Endothelial cell of umbilical vein (primary cell): ENCODE measurements at regions of chr11 and their contacts with region 1.

Region 1: DNA sequence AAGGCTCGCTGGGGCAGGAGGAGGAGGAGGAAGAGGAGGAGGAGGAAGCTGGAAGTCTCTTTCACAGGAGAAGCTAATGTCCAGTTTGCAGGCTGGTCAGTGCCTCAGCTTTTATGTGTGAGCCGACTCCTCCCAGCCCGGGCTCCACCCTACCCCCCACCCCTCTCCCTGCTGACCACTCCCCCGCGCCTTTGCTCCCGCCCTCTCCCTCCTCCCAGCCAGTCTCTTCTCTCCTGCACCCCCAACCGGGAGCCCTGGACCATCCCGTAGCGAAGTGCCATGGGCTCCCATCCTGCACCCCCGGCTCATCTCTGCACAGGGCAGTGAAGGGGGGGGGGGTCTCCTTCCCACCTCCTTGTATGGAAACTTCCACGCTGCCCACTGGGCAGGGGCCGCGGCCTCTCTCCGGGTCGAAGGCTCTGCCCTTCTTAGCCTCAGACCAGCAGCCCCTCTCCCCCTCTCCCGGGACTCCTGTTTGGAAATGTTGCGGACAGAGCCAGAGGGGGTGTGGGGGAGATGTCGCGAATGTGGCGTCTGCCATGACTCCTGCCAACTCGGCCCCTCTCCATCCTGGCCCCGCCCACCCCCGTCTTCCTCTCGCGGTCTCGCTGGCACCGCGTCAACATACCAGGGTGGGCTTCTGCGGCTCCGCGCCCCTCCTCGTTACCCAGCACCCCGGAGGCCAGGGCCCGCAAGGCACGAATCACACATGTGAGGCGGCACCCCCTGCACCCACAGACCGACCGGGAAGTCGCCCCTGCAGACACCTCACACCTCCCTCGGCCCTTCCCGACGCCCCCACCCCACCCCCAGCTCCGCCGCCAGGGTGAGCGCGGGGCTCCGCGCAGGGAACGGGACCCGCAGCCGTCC is 1.8 kb downstream of the IGF2 start:
- DNase-seq: peak; percentile 60
- H3K4me3 ChIP-seq: peak overlapping the region in 1 of 3 experiments; percentile 14
- H3K27ac ChIP-seq: no peak overlapping the region
- H3K4me1 ChIP-seq: peaks cover 3% of the 10 kb centered on the region
- H3K27me3 ChIP-seq: peaks cover 15 to 39% of the 10 kb centered on the region in 2 experiments
- CTCF ChIP-seq: no peak
- POLR2A ChIP-seq: no peak

Region 2: GRCh38 chr11:2036863-2037486 is 100.5 kb before region 1 on chr11:
- CTCF ChIA-PET with region 1: interaction called, 21 read pairs
- POLR2A ChIA-PET with region 1: no interaction called
- dilution Hi-C with region 1: no loop called
- intact Hi-C with region 1: no loop called
- DNase-seq: no peak
- H3K4me3 ChIP-seq: no peak overlapping the region
- H3K27ac ChIP-seq: no peak overlapping the region
- H3K4me1 ChIP-seq: no peaks in the 10 kb centered on the region
- H3K27me3 ChIP-seq: no peaks in the 10 kb centered on the region
- CTCF ChIP-seq: no peak
- POLR2A ChIP-seq: no peak

Region 3: DNA sequence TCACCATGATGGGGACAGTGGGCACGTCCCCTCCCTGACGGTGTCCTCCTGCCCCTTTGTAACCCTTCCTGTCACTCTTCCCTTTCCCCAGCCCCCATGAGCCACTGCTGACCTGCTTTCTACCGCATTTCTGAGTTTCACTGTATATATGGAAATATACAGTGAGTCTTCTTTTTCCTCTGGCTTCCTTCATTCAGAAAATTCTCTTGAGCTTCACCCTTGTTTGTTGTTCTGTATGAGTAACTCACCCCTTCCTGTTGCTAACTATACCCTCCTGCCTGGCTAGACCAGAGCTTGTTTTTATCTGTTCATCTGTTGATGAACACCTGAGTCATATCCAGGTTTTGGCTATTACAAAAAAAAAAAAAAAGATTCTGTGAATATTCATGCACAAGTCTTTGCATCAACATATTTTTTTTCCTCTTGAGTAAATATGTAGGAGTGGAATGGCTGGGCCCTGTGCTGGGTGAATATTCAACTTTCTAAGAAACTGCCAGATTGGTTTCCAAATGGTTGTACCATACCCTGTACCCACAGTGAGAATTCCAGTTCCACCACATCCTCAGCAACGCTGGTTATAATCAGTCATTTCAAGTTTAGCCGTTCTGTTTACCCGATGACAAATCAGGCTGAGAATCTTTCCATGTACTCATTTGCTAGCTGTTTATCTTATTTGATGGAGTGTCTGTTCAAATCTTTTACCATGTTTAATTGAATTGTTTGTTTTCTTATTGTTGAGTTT is 60.2 kb before region 1 on chr11:
- CTCF ChIA-PET with region 1: no interaction called
- POLR2A ChIA-PET with region 1: no interaction called
- dilution Hi-C with region 1: no loop called
- intact Hi-C with region 1: loop called (anchors 1 kb)
- DNase-seq: peak; percentile 86
- H3K4me3 ChIP-seq: no peak overlapping the region
- H3K27ac ChIP-seq: peak overlapping the region; percentile 80
- H3K4me1 ChIP-seq: peaks cover 17% of the 10 kb centered on the region
- H3K27me3 ChIP-seq: no peaks in the 10 kb centered on the region
- CTCF ChIP-seq: no peak
- POLR2A ChIP-seq: no peak

Region 4: GRCh38 chr11:2099516-2100340 is 37.7 kb before region 1 on chr11:
- CTCF ChIA-PET with region 1: interaction called, 3 read pairs
- POLR2A ChIA-PET with region 1: no interaction called
- dilution Hi-C with region 1: no loop called
- intact Hi-C with region 1: loop called (anchors 1 kb)
- DNase-seq: peak; percentile 36
- H3K4me3 ChIP-seq: no peak overlapping the region
- H3K27ac ChIP-seq: peak overlapping the region; percentile 90
- H3K4me1 ChIP-seq: peaks cover 35% of the 10 kb centered on the region
- H3K27me3 ChIP-seq: no peaks in the 10 kb centered on the region
- CTCF ChIP-seq: peak in 1 of 2 donors; percentile 8
- POLR2A ChIP-seq: no peak

Region 5: GRCh38 chr11:2109541-2110019 is 27.9 kb before region 1 on chr11:
- CTCF ChIA-PET with region 1: interaction called, 4 read pairs
- POLR2A ChIA-PET with region 1: interaction called, 4 read pairs
- dilution Hi-C with region 1: no loop called
- intact Hi-C with region 1: loop called (anchors 1 kb)
- DNase-seq: peak; percentile 93
- H3K4me3 ChIP-seq: no peak overlapping the region
- H3K27ac ChIP-seq: peak overlapping the region; percentile 55
- H3K4me1 ChIP-seq: peaks cover 12% of the 10 kb centered on the region
- H3K27me3 ChIP-seq: no peaks in the 10 kb centered on the region
- CTCF ChIP-seq: peak; percentile 10 to 49
- POLR2A ChIP-seq: peak; percentile 24

Region 6: GRCh38 chr11:2196970-2197770 is 59.7 kb after region 1 on chr11:
- CTCF ChIA-PET with region 1: no interaction called
- POLR2A ChIA-PET with region 1: no interaction called
- dilution Hi-C with region 1: no loop called
- intact Hi-C with region 1: no loop called
- DNase-seq: peak; percentile 38
- H3K4me3 ChIP-seq: no peak overlapping the region
- H3K27ac ChIP-seq: no peak overlapping the region
- H3K4me1 ChIP-seq: no peaks in the 10 kb centered on the region
- H3K27me3 ChIP-seq: no peaks in the 10 kb centered on the region
- CTCF ChIP-seq: peak; percentile 63 to 81
- POLR2A ChIP-seq: no peak